ENCODE measurements at regions of chr11 and their contacts with region 1.

Region 1: GRCh38 chr11:106076919-106077608 is at the start of gene KBTBD3:
- DNase-seq: peak; percentile 99
- H3K4me3 ChIP-seq: peak within 1 kb of the TSS; percentile 80 to 92
- H3K27ac ChIP-seq: peak within 1 kb of the TSS; percentile 96 to 98
- H3K4me1 ChIP-seq: no peaks in the 10 kb centered on the region
- H3K27me3 ChIP-seq: no peaks in the 10 kb centered on the region
- CTCF ChIP-seq: peak in 3 of 4 experiments; percentile 18 to 47 (median 19)
- POLR2A ChIP-seq: peak; percentile 86
- total RNA-seq, gene KBTBD3: 3.8 to 7.3 TPM

Region 2: GRCh38 chr11:106021967-106022794 is 54.9 kb before region 1 on chr11 and contains the start of gene MSANTD4:
- intact Hi-C with region 1: loop called (anchors 2 kb)
- DNase-seq: peak; percentile 98
- H3K4me3 ChIP-seq: peak within 1 kb of the TSS; percentile 70 to 83
- H3K27ac ChIP-seq: peak within 1 kb of the TSS; percentile 58 to 70
- H3K4me1 ChIP-seq: no peaks in the 10 kb centered on the region
- H3K27me3 ChIP-seq: no peaks in the 10 kb centered on the region
- CTCF ChIP-seq: no peak
- POLR2A ChIP-seq: no peak
- total RNA-seq, gene MSANTD4: 11.5 to 22.5 TPM

Measured in prostate gland (tissue), 2 donors.